ENCODE measurements at regions of chr18 and their contacts with region 1.

Region 1: DNA sequence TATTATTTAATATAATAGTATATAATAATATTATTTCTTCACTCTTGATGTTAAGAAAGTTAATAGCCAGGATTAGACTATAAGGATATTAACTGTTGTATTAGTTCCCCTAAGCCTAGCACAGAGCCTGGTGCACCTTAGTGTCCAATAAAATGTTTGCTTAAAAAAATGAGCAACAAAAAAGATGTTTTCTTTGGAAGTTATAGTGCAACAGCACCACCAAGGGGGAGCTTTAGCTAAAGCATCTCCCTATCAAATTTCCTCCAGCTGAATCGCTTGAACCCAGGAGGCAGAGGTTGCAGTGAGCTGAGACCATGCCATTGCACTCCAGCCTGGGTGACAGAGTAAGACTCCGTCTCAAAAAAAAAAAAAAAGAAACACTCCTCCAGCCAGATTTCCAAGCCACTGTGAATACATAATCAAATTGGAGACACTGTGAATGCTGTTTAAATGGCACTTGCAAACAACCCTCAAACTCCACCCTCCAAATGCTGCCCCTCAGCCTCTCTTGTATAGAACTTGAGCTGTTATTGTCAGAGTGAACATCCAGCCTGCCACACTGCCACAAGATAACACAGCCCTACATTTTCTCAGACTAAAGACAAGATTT is 221.9 kb downstream of the DYM start:
- DNase-seq: peak; percentile 44
- H3K4me3 ChIP-seq: no peak overlapping the region
- H3K27ac ChIP-seq: no peak overlapping the region
- H3K4me1 ChIP-seq: no peaks in the 10 kb centered on the region
- H3K27me3 ChIP-seq: no peaks in the 10 kb centered on the region
- CTCF ChIP-seq: peak; percentile 76
- EP300 ChIP-seq: no peak
- RAD21 ChIP-seq: peak; percentile 78

Region 2: GRCh38 chr18:48238206-48238605 is 1000.3 kb before region 1 on chr18:
- CTCF ChIA-PET with region 1: no interaction called
- POLR2A ChIA-PET with region 1: no interaction called
- DNase-seq: no peak
- H3K4me3 ChIP-seq: no peak overlapping the region
- H3K27ac ChIP-seq: no peak overlapping the region
- H3K4me1 ChIP-seq: no peaks in the 10 kb centered on the region
- H3K27me3 ChIP-seq: no peaks in the 10 kb centered on the region; the same call in 1 of the 2 replicates
- CTCF ChIP-seq: no peak
- EP300 ChIP-seq: no peak
- RAD21 ChIP-seq: no peak

Region 3: GRCh38 chr18:48951448-48952286 is 286.9 kb before region 1 on chr18:
- CTCF ChIA-PET with region 1: interaction called, 11 read pairs
- POLR2A ChIA-PET with region 1: interaction called, 7 read pairs
- DNase-seq: peak; percentile 92
- H3K4me3 ChIP-seq: peak overlapping the region; percentile 92 to 98
- H3K27ac ChIP-seq: peak overlapping the region; percentile 100
- H3K4me1 ChIP-seq: peaks cover 17 to 20% of the 10 kb centered on the region in 2 experiments
- H3K27me3 ChIP-seq: no peaks in the 10 kb centered on the region
- CTCF ChIP-seq: no peak; the same call in 1 of the 2 replicates
- EP300 ChIP-seq: peak in 1 of 2 experiments; percentile 51; a peak in 1 of 4 replicates
- RAD21 ChIP-seq: 0 out of 2 replicates have a peak, but pooled peaks have one; percentile 6

Region 4: GRCh38 chr18:49250816-49251388 is 12.4 kb after region 1 on chr18:
- CTCF ChIA-PET with region 1: interaction called, 17 read pairs
- POLR2A ChIA-PET with region 1: no interaction called
- DNase-seq: peak; percentile 26
- H3K4me3 ChIP-seq: no peak overlapping the region; a peak in 1 of 4 replicates
- H3K27ac ChIP-seq: no peak overlapping the region; a peak in 1 of 4 replicates
- H3K4me1 ChIP-seq: peaks cover 2 to 24% of the 10 kb centered on the region in 2 experiments
- H3K27me3 ChIP-seq: no peaks in the 10 kb centered on the region
- CTCF ChIP-seq: peak; percentile 65
- EP300 ChIP-seq: no peak
- RAD21 ChIP-seq: peak; percentile 74